ENCODE measurements at regions of chrX and their contacts with region 1.

Region 1: DNA sequence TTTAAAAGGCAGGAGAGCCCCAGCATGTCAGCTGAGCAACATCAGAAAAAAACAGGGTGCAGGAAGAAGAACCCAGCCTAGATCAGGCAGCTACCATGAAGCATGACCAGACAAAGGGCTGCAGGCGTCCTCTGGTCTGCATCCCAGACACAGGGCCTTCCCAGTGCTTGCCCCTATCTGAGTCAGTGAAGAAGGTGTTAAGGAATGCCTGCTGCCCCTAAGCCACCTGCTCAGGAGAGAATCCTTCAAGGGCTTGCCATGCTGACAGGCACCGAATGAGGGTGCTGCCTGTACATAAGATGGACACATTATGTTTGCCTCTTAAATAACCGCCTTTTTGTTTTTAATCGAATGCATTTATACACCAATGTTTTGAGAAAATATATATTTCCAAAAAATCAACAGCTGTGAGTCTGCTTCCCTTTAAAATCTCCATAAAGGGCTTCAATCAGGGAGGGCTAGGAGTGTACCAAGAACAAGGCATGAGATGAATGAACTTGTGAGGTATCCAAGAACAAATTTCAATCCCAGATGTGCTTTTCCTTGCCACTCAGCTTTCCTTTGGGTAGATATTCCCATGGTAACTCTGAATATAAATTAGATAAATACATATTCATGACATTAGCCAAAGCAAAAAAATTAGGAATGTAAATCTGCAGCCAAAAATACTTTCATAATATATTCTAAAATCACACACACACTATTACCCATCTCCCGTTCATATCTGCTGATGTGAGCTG is 85.1 kb downstream of the SLC9A7 start:
- DNase-seq: no peak
- H3K4me3 ChIP-seq: no peak overlapping the region
- H3K27ac ChIP-seq: no peak overlapping the region
- H3K27me3 ChIP-seq: no peaks in the 10 kb centered on the region
- CTCF ChIP-seq: no peak

Region 2: DNA sequence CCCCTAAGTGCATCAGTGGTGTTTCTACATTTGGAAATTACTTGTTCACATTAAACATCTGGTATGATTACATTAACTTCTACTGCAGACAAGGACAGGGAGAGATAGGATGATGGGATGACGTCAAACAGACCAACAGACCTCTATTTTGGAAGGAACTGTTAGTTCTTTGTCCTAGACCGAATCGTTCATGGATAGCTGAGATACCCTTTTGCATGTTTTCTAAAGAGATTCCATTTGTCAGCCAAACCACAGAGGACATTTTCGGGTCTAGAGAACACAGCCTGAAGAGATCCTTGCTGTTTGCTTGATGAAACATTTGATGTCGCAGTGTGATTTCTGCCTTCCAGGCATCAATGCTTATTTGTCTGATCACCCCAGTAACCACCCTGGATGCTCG is 72.5 kb before region 1 on chrX:
- CTCF ChIA-PET with region 1: no interaction called
- POLR2A ChIA-PET with region 1: no interaction called
- DNase-seq: no peak
- H3K4me3 ChIP-seq: no peak overlapping the region
- H3K27ac ChIP-seq: peak overlapping the region; percentile 52
- H3K27me3 ChIP-seq: no peaks in the 10 kb centered on the region
- CTCF ChIP-seq: no peak

Region 3: DNA sequence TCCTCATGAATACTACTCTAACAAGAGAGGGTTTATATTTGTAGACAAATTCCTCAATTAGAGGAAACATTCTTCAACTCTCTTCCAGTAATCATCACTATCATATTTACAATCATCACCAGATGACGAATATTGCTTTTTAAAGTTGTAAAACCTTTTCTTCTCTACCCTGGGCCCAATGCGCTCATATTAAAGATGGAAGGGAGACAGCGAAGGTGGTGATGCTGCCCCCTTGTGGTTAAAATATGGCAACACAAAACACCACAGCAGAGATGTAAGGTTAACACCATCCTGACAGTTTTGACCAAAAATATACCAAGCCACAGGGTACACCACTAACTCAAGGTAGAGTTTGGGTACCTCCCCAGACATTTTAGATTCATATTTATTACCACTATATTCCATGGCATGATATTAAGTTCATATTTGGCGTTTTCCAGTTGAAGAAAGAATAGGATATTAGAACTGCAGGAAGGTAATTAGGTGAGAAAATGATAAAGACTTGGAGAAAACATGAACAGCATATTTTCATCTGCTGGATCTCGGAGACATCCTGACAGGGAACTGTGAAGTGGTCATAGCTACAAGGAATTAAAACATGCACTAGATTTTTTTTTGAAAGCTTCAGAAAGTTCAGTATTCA is 12.3 kb after region 1 on chrX:
- CTCF ChIA-PET with region 1: interaction called, 10 read pairs
- POLR2A ChIA-PET with region 1: no interaction called
- DNase-seq: no peak
- H3K4me3 ChIP-seq: no peak overlapping the region
- H3K27ac ChIP-seq: no peak overlapping the region
- H3K27me3 ChIP-seq: no peaks in the 10 kb centered on the region
- CTCF ChIP-seq: peak; percentile 62

Measured in AG04450 (cell line).